ENCODE measurements at regions of chrX and their contacts with region 1.

Region 1: DNA sequence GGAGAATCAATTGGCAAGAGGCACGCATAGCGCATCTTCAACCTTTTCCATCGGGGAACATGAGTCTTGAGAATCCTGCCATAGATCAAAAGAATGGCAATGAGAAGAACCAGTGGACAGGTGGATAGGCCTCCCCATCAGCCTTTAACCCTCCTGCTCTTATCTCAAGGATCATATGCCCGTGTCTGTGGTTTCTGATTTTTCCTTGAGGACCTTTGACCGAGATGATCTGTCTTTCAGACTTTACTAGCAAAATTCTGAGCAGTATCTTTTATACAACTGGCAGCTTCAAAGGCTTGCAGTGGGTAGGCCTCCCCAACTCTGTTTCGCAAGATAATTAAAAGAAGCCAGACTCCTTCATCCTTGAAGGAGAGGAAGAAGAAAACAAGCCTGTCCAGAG is 174.4 kb downstream of the REPS2 start:
- DNase-seq: no peak
- H3K4me3 ChIP-seq: no peak overlapping the region
- H3K27ac ChIP-seq: no peak overlapping the region
- H3K4me1 ChIP-seq: no peaks in the 10 kb centered on the region
- H3K27me3 ChIP-seq: no peaks in the 10 kb centered on the region
- CTCF ChIP-seq: no peak

Region 2: GRCh38 chrX:17242470-17242869 is 121.7 kb after region 1 on chrX:
- CTCF ChIA-PET with region 1: no interaction called
- dilution Hi-C with region 1: no loop called
- in situ Hi-C with region 1: no loop called
- intact Hi-C with region 1: loop called (anchors 10 kb)
- DNase-seq: peak; percentile 43
- H3K4me3 ChIP-seq: no peak overlapping the region
- H3K27ac ChIP-seq: no peak overlapping the region
- H3K4me1 ChIP-seq: no peaks in the 10 kb centered on the region
- H3K27me3 ChIP-seq: peaks cover 9% of the 10 kb centered on the region
- CTCF ChIP-seq: peak; percentile 81 to 90